ENCODE measurements at regions of chrX and their contacts with region 1.

Region 1: GRCh38 chrX:12974796-12975669 is at the start of gene TMSB4X:
- DNase-seq: peak; percentile 87
- H3K4me3 ChIP-seq: peak within 1 kb of the TSS; percentile 99
- H3K27ac ChIP-seq: peak within 1 kb of the TSS; percentile 90
- H3K4me1 ChIP-seq: peaks cover 72% of the 10 kb centered on the region
- CTCF ChIP-seq: no peak
- total RNA-seq, gene TMSB4X: 1,355 and 1,476 TPM in 2 replicates

Region 2: DNA sequence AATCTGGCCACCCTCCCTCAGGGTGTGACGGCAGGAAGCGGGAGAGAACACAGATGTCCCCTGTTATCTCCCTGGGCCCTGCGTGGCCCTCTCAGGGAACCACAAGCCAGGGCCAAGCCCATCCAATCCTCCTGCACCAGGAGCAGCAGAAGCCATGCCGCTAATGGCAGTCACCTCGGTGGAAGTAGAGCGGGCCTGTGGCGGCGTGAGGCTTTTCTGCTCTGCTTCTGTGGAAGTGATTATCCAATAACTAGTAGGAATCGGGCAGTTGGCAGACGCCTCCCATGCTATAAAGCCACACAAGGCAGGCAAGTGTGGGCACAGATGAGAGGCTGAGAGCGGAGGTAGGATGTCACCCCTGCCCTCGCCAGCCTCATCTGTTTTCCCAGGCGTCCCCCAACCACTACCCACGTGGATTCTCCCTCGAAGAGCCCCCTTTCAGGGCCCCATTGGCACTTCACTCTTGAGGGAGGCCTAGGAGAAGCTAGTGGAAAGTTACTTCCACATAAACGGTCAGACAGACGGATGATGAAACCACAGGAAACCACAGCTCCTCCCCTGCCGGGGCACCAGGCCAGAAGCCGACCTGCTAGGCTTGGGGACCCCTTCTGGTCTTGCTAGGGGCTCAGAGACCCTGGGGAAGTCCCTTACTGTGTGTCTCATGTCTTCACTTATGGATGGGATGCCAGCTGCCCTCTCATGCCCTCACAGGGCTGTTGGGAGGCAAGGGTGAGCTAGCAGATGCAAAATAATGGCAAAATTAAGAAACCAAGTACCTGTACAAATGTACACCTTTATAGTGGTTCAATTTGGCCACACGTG is 18.9 kb before region 1 on chrX:
- CTCF ChIA-PET with region 1: interaction called, 4 read pairs
- POLR2A ChIA-PET with region 1: interaction called, 148 read pairs
- intact Hi-C with region 1: loop called (anchors 1 kb)
- DNase-seq: peak; percentile 88
- H3K4me3 ChIP-seq: peak overlapping the region; percentile 63
- H3K27ac ChIP-seq: peak overlapping the region; percentile 100
- H3K4me1 ChIP-seq: peaks cover 85% of the 10 kb centered on the region
- CTCF ChIP-seq: no peak

Region 3: DNA sequence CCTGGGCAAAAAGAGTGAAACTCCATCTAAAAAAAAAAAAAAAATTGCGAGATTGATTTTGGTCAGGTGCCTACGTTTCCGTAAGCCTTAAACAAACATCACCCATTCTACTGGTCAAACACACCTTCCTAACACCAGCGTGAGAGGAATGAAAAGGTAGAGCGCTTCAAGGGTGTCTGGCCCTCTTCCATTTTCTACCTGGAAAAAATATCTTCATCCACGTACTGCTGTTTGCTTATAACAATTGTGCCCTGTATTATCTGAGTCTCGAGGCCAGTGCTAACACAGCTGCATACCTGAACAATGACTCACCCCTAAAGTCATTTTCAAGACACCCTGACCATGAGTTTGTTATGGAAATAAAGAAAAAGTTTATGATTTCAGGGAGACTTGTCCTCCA is 13.8 kb after region 1 on chrX:
- CTCF ChIA-PET with region 1: no interaction called
- POLR2A ChIA-PET with region 1: interaction called, 11 read pairs
- intact Hi-C with region 1: no loop called
- DNase-seq: no peak
- H3K4me3 ChIP-seq: no peak overlapping the region
- H3K27ac ChIP-seq: no peak overlapping the region
- H3K4me1 ChIP-seq: no peaks in the 10 kb centered on the region
- CTCF ChIP-seq: no peak

Region 4: GRCh38 chrX:13000301-13000811 is 25.3 kb after region 1 on chrX:
- CTCF ChIA-PET with region 1: no interaction called
- POLR2A ChIA-PET with region 1: interaction called, 35 read pairs
- intact Hi-C with region 1: loop called (anchors 2 kb)
- DNase-seq: peak; percentile 80
- H3K4me3 ChIP-seq: peak overlapping the region; percentile 62
- H3K27ac ChIP-seq: peak overlapping the region; percentile 83
- H3K4me1 ChIP-seq: peaks cover 64% of the 10 kb centered on the region
- CTCF ChIP-seq: no peak

Region 5: DNA sequence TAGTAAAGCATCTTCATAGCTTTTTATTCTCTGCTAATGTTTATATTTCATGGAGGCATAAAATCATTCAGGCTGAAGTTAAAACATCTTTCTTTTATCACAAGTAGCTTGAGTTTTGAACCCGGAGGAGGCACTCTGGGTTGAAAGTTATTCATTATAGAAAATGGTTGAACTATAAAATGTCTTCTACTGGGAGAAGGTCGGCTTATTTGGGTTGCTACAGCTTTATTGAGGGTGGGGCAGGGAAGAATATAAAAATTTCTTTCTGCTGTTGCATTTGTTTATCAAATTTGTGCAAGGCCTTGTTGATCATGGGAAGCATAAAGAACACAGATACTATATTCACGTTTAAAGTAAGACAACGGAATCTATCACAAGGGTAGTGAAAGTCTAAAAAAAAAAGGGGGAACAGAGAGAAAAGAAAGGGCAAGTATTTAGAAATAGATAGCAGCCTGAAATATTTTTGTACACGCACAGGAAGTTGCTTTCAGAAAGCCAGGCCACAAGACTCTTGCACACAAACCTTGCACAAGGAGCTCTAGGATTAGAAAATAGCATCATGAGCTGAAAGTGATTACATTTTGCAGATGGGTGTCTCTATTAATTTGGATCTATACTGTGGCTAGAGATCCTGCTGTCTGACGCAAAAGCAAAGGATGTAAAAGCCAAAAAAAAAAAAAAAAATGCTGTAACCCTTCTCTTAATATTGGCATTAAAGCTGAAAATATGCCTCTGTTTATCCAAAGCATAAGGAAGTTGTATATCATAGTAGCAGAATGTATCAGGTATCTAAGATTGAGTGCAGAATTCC is 106.6 kb after region 1 on chrX:
- CTCF ChIA-PET with region 1: no interaction called
- POLR2A ChIA-PET with region 1: interaction called, 51 read pairs
- intact Hi-C with region 1: loop called (anchors 2 kb)
- DNase-seq: peak; percentile 70
- H3K4me3 ChIP-seq: peak overlapping the region; percentile 39
- H3K27ac ChIP-seq: peak overlapping the region; percentile 93
- H3K4me1 ChIP-seq: peaks cover 100% of the 10 kb centered on the region
- CTCF ChIP-seq: no peak

Region 6: GRCh38 chrX:13087322-13088155 is 112.5 kb after region 1 on chrX:
- CTCF ChIA-PET with region 1: no interaction called
- POLR2A ChIA-PET with region 1: interaction called, 51 read pairs
- intact Hi-C with region 1: no loop called
- DNase-seq: peak; percentile 89
- H3K4me3 ChIP-seq: peak overlapping the region; percentile 44
- H3K27ac ChIP-seq: peak overlapping the region; percentile 98
- H3K4me1 ChIP-seq: peaks cover 94% of the 10 kb centered on the region
- CTCF ChIP-seq: no peak

Measured in OCI-LY7 (cell line).